Common myeloid progenitor, CD34-positive (primary cell): ENCODE measurements at regions of chr11 and their contacts with region 1.

Region 1: DNA sequence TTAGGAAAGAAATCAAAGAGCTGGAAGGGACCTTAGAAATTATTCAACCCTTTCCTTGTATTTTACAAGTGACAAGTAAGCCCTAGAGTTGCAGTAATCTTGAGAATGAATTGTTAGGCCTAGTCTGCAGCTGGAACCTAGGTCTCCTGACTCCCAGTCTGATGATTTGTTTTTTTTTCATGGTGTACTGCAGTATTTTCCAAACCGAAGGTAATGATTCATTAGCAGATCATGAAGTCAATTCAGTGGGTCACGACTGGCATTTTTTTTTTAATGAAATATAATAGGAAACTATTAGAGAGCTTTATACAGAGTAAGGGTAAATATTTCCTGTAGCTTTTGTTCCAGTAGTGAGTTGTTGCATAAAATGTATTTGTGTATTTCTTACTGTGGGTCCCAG is 42.8 kb downstream of the EXT2 start:
- DNase-seq: no peak
- H3K4me3 ChIP-seq: no peak overlapping the region
- H3K27ac ChIP-seq: no peak overlapping the region
- H3K4me1 ChIP-seq: no peaks in the 10 kb centered on the region
- H3K27me3 ChIP-seq: no peaks in the 10 kb centered on the region

Region 2: GRCh38 chr11:44120169-44120568 is 18.1 kb before region 1 on chr11:
- CTCF ChIA-PET with region 1: interaction called, 10 read pairs
- POLR2A ChIA-PET with region 1: no interaction called
- DNase-seq: peak in 2 of 3 donors; percentile 12 to 24
- H3K4me3 ChIP-seq: no peak overlapping the region
- H3K27ac ChIP-seq: no peak overlapping the region
- H3K4me1 ChIP-seq: no peaks in the 10 kb centered on the region
- H3K27me3 ChIP-seq: no peaks in the 10 kb centered on the region